ENCODE measurements at regions of chr12 and their contacts with region 1.

Region 1: GRCh38 chr12:89019408-89020120 is 332.7 kb downstream of the DUSP6 start:
- DNase-seq: peak; percentile 80 to 88 (median 85)
- H3K4me3 ChIP-seq: peak overlapping the region in 6 of 7 experiments; percentile 22 to 77 (median 52)
- H3K27ac ChIP-seq: no peak overlapping the region
- H3K4me1 ChIP-seq: peaks cover 0 to 20% (median 9%) of the 10 kb centered on the region in 4 experiments
- H3K27me3 ChIP-seq: no peaks in the 10 kb centered on the region

Region 2: GRCh38 chr12:88854260-88854659 is 165.3 kb before region 1 on chr12:
- CTCF ChIA-PET with region 1: no interaction called
- POLR2A ChIA-PET with region 1: no interaction called
- DNase-seq: no peak
- H3K4me3 ChIP-seq: no peak overlapping the region
- H3K27ac ChIP-seq: no peak overlapping the region
- H3K4me1 ChIP-seq: no peaks in the 10 kb centered on the region
- H3K27me3 ChIP-seq: no peaks in the 10 kb centered on the region

Region 3: DNA sequence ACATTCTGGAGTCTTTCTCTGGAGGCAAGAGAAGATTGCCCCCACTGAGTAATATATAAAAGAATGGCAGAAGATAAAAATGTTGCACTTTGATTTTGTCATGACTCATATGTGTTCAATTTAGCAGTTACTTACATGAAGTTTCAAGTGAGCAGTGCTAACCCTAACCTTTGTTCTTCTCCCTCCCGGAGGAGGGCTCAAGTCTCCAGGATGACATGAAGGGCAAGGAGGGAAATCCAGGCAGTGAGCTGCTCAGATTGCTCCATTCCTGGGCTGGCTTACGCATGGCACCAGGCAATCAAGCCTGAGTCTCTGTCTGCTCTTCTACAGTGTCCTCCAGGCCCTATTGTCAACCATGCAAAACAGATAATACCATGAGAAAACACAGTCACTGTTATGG is 10.4 kb after region 1 on chr12:
- CTCF ChIA-PET with region 1: interaction called, 19 read pairs
- POLR2A ChIA-PET with region 1: no interaction called
- DNase-seq: no peak
- H3K4me3 ChIP-seq: no peak overlapping the region
- H3K27ac ChIP-seq: no peak overlapping the region
- H3K4me1 ChIP-seq: peaks cover 0 to 6% (median 0%) of the 10 kb centered on the region in 4 experiments
- H3K27me3 ChIP-seq: no peaks in the 10 kb centered on the region

Region 4: DNA sequence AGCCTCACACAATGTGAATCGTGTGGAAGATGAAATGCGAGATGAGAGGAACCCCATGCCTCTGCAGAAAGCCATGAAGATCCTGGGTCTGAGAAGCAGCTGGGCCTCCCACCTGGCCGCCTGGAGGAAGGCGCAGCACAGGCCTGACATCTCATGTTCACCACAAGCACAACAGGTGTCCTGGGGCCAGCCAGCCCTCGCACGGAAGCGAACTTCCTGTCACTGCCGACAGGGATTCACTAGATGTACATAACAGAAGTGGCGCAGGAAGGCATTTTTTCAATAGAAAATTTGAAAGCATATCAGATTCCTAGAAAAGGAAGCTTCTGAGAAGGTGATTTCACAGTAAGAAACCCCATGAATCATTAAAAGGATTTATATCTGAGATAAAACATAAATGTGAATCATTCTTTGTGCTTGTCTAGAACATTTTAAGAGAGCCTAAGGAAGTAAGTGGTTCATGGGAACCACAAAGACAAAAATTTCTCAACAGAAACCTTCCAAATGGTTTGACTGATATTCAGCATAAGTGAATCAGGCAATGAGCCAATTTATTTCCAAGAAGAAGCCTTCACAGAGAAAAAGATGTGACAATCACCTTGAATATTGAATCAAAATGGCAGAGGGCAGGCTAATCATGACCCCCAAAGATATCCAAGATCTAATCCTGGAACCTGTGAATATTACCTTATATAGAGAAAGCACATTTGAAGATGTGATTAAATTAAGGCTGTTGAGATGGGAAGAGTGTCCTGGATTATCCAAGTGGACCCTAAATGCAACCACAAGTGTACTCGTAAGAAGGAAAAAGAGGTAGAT is 20.8 kb after region 1 on chr12:
- CTCF ChIA-PET with region 1: interaction called, 10 read pairs
- POLR2A ChIA-PET with region 1: no interaction called
- DNase-seq: peak; percentile 84 to 97 (median 95)
- H3K4me3 ChIP-seq: peak overlapping the region in 1 of 7 experiments; percentile 23
- H3K27ac ChIP-seq: peak overlapping the region; percentile 29 to 57
- H3K4me1 ChIP-seq: peaks cover 8 to 43% (median 39%) of the 10 kb centered on the region in 4 experiments
- H3K27me3 ChIP-seq: no peaks in the 10 kb centered on the region

Region 5: DNA sequence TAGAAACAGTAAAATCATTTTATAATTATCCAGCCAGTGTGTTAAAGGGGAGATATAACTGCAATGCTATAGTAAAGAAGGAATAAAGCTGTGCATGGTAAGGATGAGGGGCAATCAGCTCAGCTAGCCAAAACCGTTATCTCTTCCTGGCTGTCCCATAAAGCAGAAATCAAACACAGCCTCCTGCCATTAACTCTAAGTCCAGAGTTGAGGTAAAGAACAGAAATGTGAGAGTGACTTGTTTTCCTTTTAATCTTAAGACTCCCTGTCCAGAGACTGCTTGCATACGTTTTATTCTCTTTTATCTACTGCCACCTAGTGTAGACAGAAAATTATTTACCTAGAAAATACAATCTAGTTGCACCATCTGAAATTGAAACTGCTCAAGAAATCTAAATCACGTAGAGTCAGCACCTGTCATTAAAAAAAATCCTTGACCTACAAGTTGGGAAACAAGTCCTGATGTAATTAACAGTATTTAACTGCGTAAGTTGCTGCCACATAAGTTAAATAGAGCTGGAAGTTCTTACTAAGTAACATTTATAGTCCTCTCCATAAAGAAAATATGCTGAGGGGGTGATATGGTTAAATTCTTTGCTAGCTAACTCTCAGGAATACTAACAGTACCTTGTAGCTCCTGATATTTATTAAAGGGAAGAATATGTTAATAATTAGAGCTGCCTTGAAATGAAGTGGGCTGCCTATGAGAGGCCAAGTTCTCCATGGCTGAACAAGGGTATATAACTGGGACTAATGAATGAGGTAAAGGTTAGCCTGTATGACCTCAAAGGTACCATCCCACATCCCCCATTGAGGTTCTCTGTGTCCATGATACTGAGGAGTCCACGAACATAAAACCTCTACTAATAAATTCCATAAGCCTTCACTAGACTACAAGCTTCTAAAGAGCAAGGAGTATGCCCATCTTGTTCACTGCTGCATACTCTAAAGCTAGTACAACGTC is 442.4 kb after region 1 on chr12:
- CTCF ChIA-PET with region 1: interaction called, 117 read pairs
- POLR2A ChIA-PET with region 1: no interaction called
- DNase-seq: peak; percentile 70 to 76 (median 76)
- H3K4me3 ChIP-seq: peak overlapping the region in 1 of 7 experiments; percentile 48
- H3K27ac ChIP-seq: no peak overlapping the region
- H3K4me1 ChIP-seq: peaks cover 0 to 26% (median 10%) of the 10 kb centered on the region in 4 experiments
- H3K27me3 ChIP-seq: no peaks in the 10 kb centered on the region

Region 6: DNA sequence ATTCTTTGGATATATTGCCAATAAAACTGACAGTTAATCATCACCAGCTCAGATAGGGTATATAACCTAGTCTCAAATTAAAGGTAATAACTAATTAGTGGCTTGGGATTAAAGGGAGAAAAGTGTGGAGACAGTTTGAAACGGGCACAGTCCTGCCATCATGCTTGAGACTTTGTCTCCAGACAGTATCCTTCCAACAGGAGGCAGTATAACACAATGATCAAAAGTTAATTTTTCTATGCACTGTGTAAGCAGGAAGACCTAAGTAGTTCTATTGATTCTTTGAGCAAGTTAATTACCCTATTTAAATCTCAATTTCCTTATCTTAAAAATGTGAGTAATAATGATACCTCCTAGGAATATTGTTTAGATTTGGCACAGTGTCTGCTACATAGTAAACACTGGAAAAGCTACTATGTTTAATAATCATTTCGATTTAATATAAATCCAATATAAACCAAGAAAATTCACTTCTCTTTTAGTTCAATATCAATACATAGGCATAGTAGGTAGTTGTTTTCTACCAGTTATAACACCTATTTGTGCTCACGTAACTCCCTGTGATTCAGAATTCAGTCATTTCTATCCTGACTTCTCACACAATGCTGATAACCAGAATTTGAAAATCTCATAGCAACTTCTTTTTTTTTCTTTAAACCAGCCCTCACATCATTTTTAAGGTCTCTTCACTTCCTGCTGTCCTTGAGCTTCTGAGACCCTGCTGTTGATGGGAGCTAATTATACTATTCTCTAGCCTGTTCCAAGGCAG is 451.4 kb after region 1 on chr12:
- CTCF ChIA-PET with region 1: interaction called, 12 read pairs
- POLR2A ChIA-PET with region 1: no interaction called
- DNase-seq: peak; percentile 59 to 80 (median 77)
- H3K4me3 ChIP-seq: no peak overlapping the region
- H3K27ac ChIP-seq: no peak overlapping the region
- H3K4me1 ChIP-seq: peaks cover 17 to 38% (median 23%) of the 10 kb centered on the region in 4 experiments
- H3K27me3 ChIP-seq: no peaks in the 10 kb centered on the region

Region 7: GRCh38 chr12:89524541-89525285 is 505.1 kb after region 1 on chr12 and contains the start of gene GALNT4:
- CTCF ChIA-PET with region 1: interaction called, 17 read pairs
- POLR2A ChIA-PET with region 1: no interaction called
- DNase-seq: peak; percentile 91 to 94 (median 93)
- H3K4me3 ChIP-seq: peak within 1 kb of the TSS; percentile 79 to 96 (median 94)
- H3K27ac ChIP-seq: peak within 1 kb of the TSS; percentile 77 to 87
- H3K4me1 ChIP-seq: peaks cover 20 to 55% (median 38%) of the 10 kb centered on the region in 4 experiments
- H3K27me3 ChIP-seq: no peaks in the 10 kb centered on the region

Region 8: DNA sequence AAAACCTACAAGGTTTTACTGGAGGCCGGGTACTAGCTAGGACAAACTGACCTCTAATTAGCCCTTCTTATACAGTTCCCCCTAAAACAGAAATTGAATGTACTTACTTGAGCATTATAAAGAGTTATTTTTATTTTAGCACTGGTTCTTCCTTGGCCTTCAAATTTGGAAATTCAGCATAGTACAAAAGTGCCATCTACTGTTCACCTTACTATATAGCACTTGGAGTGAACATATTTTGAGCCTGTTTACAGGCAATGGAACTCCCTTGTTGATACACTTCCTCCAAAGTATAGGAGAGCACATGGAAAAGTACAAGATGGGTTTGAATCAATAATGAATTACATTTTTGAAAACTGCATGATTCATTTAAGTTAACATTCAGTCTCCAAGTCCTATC is 510.2 kb after region 1 on chr12:
- CTCF ChIA-PET with region 1: interaction called, 17 read pairs
- POLR2A ChIA-PET with region 1: no interaction called
- DNase-seq: peak; percentile 64 to 83 (median 79)
- H3K4me3 ChIP-seq: no peak overlapping the region
- H3K27ac ChIP-seq: no peak overlapping the region
- H3K4me1 ChIP-seq: peaks cover 4 to 23% (median 11%) of the 10 kb centered on the region in 4 experiments
- H3K27me3 ChIP-seq: no peaks in the 10 kb centered on the region